ENCODE measurements at regions of chr2 and their contacts with region 1.

Region 1: DNA sequence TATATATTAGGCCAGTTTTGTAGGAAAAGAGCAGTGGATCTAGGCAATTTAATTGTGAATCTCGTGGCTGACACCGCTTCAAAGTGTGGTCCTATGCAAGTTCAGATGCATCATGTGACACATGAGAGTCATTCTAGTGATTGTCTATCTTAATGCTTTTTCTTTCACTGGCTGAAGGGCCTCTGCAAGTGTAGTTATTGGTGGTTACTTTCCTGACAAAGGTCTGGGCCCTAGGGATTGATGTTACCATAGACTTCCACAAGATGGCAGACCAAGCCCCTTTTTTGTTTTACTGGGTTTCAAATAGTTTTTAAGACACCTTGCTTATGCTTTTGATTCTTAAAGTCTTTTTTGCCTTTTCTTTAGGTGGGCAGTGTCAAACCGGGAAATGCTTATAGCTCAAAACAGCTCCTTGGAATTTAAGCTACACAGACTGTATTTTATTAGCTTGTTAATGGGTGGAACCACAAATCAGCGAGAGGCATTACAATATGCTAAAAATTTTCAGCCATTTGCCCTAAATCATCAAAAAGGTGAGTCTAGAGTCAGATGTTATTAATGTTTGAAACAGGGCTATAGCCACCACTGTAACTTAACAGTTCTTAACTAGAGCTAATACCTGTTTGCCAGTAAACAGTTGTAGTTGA is 25.9 kb downstream of the CD8A start:
- DNase-seq: no peak
- ATAC-seq: peak in 3 of 4 donors; percentile 40 to 71 (median 61)
- H3K4me3 ChIP-seq: no peak overlapping the region
- H3K27ac ChIP-seq: no peak overlapping the region
- H3K4me1 ChIP-seq: peaks cover 24% of the 10 kb centered on the region
- H3K27me3 ChIP-seq: no peaks in the 10 kb centered on the region
- CTCF ChIP-seq: peak; percentile 62

Region 2: DNA sequence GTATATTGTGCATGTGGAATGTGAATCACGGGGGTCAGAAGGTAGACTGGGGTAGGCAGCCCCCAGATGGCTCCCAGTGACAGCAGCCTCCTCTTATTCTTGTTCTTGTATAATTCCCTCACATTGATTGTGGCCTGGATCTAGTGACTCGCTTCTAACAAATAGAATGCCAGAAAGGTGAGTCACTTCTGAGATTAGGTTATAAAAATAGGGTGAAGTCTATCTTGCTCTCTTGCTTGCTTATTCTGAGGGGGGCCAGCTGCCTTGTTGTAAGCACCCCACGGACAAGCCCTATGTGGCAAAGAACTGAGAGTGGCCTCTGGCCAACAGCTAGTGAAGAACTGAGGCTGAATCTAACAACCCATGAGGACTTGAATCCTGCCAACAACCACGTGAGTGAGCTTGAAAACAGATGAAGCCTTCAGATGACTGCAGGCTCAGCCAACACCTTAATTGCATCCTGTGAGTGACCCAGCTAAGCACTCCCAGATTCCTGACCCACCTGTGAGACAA is 60.3 kb before region 1 on chr2:
- intact Hi-C with region 1: loop called in 1 of 2 experiments (anchors 5 kb)
- DNase-seq: peak in 1 of 2 donors; percentile 52
- ATAC-seq: peak; percentile 90 to 96 (median 92)
- H3K4me3 ChIP-seq: peak overlapping the region; percentile 53
- H3K27ac ChIP-seq: peak overlapping the region; percentile 90
- H3K4me1 ChIP-seq: peaks cover 18% of the 10 kb centered on the region
- H3K27me3 ChIP-seq: no peaks in the 10 kb centered on the region
- CTCF ChIP-seq: no peak